Left ventricle myocardium inferior (tissue), 1 donor: ENCODE measurements at regions of chr9 and their contacts with region 1.

Region 1: GRCh38 chr9:91298311-91298710 is 63.4 kb downstream of the AUH start:
- DNase-seq: no peak
- H3K4me3 ChIP-seq: no peak overlapping the region
- H3K27ac ChIP-seq: no peak overlapping the region
- H3K4me1 ChIP-seq: peaks cover 22% of the 10 kb centered on the region
- H3K27me3 ChIP-seq: no peaks in the 10 kb centered on the region
- CTCF ChIP-seq: no peak

Region 2: GRCh38 chr9:90972057-90972456 is 326.3 kb before region 1 on chr9:
- intact Hi-C with region 1: no loop called
- DNase-seq: no peak
- H3K4me3 ChIP-seq: no peak overlapping the region
- H3K27ac ChIP-seq: no peak overlapping the region
- H3K4me1 ChIP-seq: no peaks in the 10 kb centered on the region
- H3K27me3 ChIP-seq: peaks cover 16% of the 10 kb centered on the region
- CTCF ChIP-seq: no peak

Region 3: GRCh38 chr9:91089405-91090129 is 208.7 kb before region 1 on chr9:
- intact Hi-C with region 1: loop called (anchors 10 kb)
- DNase-seq: no peak
- H3K4me3 ChIP-seq: no peak overlapping the region
- H3K27ac ChIP-seq: no peak overlapping the region
- H3K4me1 ChIP-seq: peaks cover 4% of the 10 kb centered on the region
- H3K27me3 ChIP-seq: no peaks in the 10 kb centered on the region
- CTCF ChIP-seq: peak; percentile 68